ENCODE measurements at regions of chr12 and their contacts with region 1.

Region 1: DNA sequence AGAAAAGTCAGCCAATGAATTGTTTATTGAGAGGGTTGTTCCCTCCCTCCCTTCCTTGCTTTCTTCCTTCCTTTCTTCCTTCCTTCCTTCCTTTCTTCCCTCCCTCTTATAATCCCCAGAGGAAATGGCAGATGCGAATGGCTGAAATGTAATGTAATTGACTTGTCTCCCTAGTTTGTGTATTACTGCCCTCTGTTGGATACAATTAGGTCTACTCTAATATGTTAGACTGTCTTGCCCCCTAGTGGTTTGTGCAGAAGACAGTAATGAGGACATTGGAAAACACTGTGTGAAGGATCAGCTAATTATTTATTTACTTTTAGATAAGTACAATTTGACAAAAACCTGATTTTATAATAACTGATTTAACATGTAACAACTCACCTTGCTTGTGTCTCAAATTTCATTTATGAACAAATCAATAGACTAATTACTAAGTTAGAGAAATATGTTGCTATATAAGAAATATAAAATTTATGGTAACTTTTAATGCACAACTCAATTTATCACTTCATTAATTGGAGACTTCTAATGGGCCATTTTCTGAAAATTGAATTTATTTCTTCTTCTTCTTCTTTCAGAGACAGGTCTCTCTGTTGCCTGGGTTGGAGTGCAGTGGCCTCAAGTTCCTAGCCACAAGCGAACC is 229.8 kb upstream of the LRIG3 start:
- DNase-seq: no peak
- H3K4me3 ChIP-seq: no peak overlapping the region
- H3K27me3 ChIP-seq: no peaks in the 10 kb centered on the region
- CTCF ChIP-seq: peak; percentile 83

Region 2: GRCh38 chr12:59122784-59123183 is 27.3 kb before region 1 on chr12:
- CTCF ChIA-PET with region 1: interaction called, 24 read pairs
- POLR2A ChIA-PET with region 1: no interaction called
- DNase-seq: no peak
- H3K4me3 ChIP-seq: no peak overlapping the region
- H3K27me3 ChIP-seq: no peaks in the 10 kb centered on the region
- CTCF ChIP-seq: no peak

Region 3: DNA sequence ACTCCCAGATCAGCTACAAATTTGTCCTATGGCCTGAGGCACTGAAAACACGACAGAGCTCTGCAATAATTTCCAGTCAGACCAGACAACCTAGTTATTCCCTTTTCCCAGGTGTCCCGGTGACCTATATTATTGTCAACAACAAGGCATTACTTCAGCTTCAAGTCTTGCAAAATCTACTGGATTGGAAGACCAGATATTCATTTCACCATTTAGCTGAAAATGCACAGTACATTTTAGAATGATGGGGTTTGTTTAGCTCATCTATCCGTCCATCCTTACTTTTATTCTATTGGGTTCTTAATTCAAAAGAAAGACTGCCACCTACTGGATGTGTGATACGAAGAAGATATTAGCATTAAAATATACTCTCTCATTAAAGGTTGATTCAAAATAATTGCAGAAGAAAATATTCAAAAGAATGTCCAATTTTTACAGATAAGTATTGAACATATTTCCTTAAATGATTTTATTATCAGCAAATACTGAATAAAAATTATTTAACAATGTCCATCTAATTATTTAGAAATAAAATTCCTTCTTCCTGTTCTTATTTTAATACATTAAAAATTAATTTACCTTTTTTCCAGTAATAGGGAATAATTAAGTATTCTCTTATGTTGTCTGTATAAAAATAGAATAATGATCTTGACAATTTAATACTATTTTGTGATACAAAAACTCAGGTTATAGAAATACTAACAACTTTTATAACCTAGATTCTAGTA is 15.0 kb after region 1 on chr12:
- CTCF ChIA-PET with region 1: interaction called, 16 read pairs
- POLR2A ChIA-PET with region 1: no interaction called
- DNase-seq: no peak
- H3K4me3 ChIP-seq: no peak overlapping the region
- H3K27me3 ChIP-seq: no peaks in the 10 kb centered on the region; the same call in 1 of the 2 replicates
- CTCF ChIP-seq: peak; percentile 46